ENCODE measurements at regions of chr5 and their contacts with region 1.

Region 1: DNA sequence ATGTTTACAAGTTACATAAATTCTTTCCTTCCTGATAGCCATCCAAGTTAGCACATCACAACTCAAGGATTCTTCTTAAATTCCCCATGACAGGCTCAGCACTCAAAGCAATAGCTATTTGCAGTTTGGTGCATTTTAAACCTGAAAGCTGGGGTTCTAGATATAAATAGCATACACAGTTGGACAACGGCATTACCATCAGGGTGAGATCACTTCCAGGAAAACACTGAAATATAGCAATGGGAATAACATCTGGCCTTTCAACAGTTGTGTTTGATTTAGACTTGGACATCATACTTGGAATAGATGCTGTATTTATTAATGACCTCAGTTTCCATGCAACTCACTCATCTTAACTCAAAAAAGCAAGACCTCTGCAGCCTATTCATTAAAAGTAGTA is 24.7 kb upstream of the LECT2 start:
- DNase-seq: no peak
- H3K27ac ChIP-seq: no peak overlapping the region
- CTCF ChIP-seq: no peak

Region 2: DNA sequence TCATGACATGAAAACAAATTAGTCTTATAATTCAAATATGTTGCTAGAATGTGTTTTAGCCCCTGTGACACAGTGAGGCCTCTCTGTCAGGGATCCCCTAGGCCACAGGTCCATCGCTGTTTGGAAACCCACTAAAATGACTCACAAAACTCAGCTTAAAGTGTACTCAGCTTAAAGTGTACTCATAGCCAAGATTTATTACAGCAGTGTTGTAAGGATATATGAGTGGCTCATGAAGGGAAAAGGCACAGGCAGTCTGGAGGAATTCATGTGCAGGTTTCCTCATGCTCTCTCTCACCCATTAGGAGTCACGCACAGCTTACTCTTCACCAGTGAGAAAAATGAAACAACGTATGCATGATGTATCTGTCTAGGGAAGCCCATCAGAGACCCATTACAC is 24.9 kb after region 1 on chr5:
- CTCF ChIA-PET with region 1: no interaction called
- POLR2A ChIA-PET with region 1: no interaction called
- DNase-seq: peak; percentile 64
- H3K27ac ChIP-seq: peak overlapping the region; percentile 70; the same call in 1 of the 2 replicates
- CTCF ChIP-seq: no peak

Region 3: GRCh38 chr5:136062366-136063274 is 83.1 kb after region 1 on chr5:
- CTCF ChIA-PET with region 1: no interaction called
- POLR2A ChIA-PET with region 1: no interaction called
- DNase-seq: peak; percentile 59
- H3K27ac ChIP-seq: peak overlapping the region; percentile 53
- CTCF ChIP-seq: no peak; the same call in 1 of the 2 replicates

Region 4: GRCh38 chr5:136084698-136085097 is 105.2 kb after region 1 on chr5:
- CTCF ChIA-PET with region 1: interaction called, 10 read pairs
- POLR2A ChIA-PET with region 1: no interaction called
- DNase-seq: no peak
- H3K27ac ChIP-seq: no peak overlapping the region
- CTCF ChIP-seq: no peak

Measured in RWPE1 (cell line).